Heart right ventricle (tissue), 16 donors: ENCODE measurements at regions of chr20 and their contacts with region 1.

Region 1: DNA sequence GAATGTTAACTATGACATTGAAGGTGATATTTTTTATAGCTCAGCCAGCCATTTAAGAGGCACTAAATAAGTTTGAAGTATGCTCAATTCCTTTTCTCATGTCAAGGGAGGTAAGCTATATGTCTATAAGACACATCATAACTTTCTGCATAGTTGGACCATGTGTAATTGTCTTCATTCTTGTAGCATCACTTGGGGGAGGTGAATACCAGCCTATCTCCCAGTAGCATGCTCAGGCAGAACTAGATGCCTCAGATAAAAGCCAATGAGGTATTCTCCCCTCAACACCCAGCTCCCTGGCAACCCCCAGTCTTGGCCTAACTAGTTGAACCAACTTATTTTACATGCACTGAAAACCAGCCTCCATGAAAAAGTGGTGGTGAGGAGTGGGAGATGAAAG is 158.3 kb upstream of the JAG1 start:
- DNase-seq: no peak
- ATAC-seq: no peak
- H3K4me3 ChIP-seq: no peak overlapping the region
- H3K27ac ChIP-seq: no peak overlapping the region
- H3K4me1 ChIP-seq: no peaks in the 10 kb centered on the region
- H3K27me3 ChIP-seq: no peaks in the 10 kb centered on the region
- CTCF ChIP-seq: no peak

Region 2: DNA sequence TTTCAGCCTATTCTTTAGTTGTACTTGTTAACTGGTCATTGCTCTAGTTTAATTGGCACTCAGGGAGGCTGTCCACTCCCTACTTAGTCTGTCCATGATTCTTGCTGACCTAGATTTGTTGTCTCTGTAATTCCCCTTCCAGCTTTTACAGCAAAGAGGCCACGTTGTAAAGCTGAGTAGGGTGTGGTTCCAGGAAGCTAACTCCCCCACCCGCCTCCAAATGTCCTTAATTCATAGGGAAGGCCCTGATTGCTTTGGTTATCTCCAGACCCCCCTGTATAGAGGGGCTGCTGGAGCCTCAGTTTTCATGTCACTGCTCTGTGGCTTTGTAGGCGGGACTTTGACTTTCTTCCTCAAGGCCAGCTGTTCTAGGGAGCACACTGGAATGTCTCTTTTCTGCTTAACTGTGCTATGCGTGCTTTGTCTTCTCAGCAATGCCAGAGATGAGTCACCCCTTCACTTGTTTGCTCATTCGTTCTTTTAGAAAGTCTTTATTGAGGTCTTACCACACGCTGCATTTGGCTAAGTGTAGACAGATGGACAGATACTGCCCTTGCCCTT is 16.7 kb after region 1 on chr20:
- intact Hi-C with region 1: loop called in 1 of 10 experiments (anchors 1 kb)
- DNase-seq: peak in 1 of 2 donors; percentile 30
- ATAC-seq: peak; percentile 75 to 93 (median 90)
- H3K4me3 ChIP-seq: no peak overlapping the region
- H3K27ac ChIP-seq: peak overlapping the region in 8 of 10 donors; percentile 3 to 59 (median 34)
- H3K4me1 ChIP-seq: peaks cover 0 to 9% (median 4%) of the 10 kb centered on the region in 9 donors
- H3K27me3 ChIP-seq: no peaks in the 10 kb centered on the region
- CTCF ChIP-seq: no peak

Region 3: GRCh38 chr20:11057624-11058023 is 225.5 kb after region 1 on chr20:
- intact Hi-C with region 1: no loop called
- DNase-seq: no peak
- ATAC-seq: no peak
- H3K4me3 ChIP-seq: no peak overlapping the region
- H3K27ac ChIP-seq: no peak overlapping the region
- H3K4me1 ChIP-seq: no peaks in the 10 kb centered on the region
- H3K27me3 ChIP-seq: no peaks in the 10 kb centered on the region
- CTCF ChIP-seq: no peak